ENCODE measurements at regions of chr3 and their contacts with region 1.

Region 1: DNA sequence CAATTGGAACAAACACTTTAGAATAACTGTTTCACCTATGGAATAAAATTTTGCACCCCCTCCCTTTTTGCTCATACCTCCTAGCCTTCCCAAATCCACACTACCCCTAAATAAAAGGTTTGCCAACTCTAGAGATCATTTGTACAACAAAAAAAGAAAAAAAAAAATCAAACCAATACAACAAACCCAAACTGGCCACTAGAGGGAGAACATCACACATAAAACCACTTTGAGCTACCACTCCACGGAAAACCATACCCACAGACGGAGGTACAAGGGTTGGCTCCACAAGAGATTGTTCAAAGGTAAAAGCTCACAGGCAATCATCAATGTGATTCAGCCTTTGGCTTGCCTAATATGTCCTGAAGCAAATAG is 47.6 kb downstream of the SETMAR start:
- DNase-seq: peak; percentile 31
- ATAC-seq: peak; percentile 96
- H3K4me3 ChIP-seq: no peak overlapping the region
- H3K27ac ChIP-seq: no peak overlapping the region
- H3K4me1 ChIP-seq: no peaks in the 10 kb centered on the region
- H3K27me3 ChIP-seq: no peaks in the 10 kb centered on the region
- CTCF ChIP-seq: peak; percentile 64 to 78 (median 73)
- EP300 ChIP-seq: no peak
- POLR2A ChIP-seq: no peak
- RAD21 ChIP-seq: peak; percentile 95

Region 2: GRCh38 chr3:3468596-3468995 is 882.2 kb before region 1 on chr3:
- CTCF ChIA-PET with region 1: no interaction called
- POLR2A ChIA-PET with region 1: no interaction called
- RAD21 ChIA-PET with region 1: no interaction called
- SMC1A ChIA-PET with region 1: no interaction called
- in situ Hi-C with region 1: no loop called
- intact Hi-C with region 1: no loop called
- DNase-seq: no peak
- ATAC-seq: no peak
- H3K4me3 ChIP-seq: no peak overlapping the region
- H3K27ac ChIP-seq: no peak overlapping the region
- H3K4me1 ChIP-seq: no peaks in the 10 kb centered on the region
- H3K27me3 ChIP-seq: no peaks in the 10 kb centered on the region
- CTCF ChIP-seq: no peak
- EP300 ChIP-seq: no peak
- POLR2A ChIP-seq: no peak
- RAD21 ChIP-seq: no peak

Region 3: GRCh38 chr3:4340411-4341335 is 10.1 kb before region 1 on chr3:
- CTCF ChIA-PET with region 1: interaction called, 16 read pairs
- POLR2A ChIA-PET with region 1: no interaction called
- RAD21 ChIA-PET with region 1: interaction called, 4 read pairs
- SMC1A ChIA-PET with region 1: interaction called, 7 read pairs
- in situ Hi-C with region 1: no loop called
- intact Hi-C with region 1: no loop called
- DNase-seq: no peak
- ATAC-seq: no peak
- H3K4me3 ChIP-seq: no peak overlapping the region
- H3K27ac ChIP-seq: no peak overlapping the region
- H3K4me1 ChIP-seq: no peaks in the 10 kb centered on the region
- H3K27me3 ChIP-seq: no peaks in the 10 kb centered on the region
- CTCF ChIP-seq: no peak
- EP300 ChIP-seq: no peak
- POLR2A ChIP-seq: no peak
- RAD21 ChIP-seq: no peak

Region 4: DNA sequence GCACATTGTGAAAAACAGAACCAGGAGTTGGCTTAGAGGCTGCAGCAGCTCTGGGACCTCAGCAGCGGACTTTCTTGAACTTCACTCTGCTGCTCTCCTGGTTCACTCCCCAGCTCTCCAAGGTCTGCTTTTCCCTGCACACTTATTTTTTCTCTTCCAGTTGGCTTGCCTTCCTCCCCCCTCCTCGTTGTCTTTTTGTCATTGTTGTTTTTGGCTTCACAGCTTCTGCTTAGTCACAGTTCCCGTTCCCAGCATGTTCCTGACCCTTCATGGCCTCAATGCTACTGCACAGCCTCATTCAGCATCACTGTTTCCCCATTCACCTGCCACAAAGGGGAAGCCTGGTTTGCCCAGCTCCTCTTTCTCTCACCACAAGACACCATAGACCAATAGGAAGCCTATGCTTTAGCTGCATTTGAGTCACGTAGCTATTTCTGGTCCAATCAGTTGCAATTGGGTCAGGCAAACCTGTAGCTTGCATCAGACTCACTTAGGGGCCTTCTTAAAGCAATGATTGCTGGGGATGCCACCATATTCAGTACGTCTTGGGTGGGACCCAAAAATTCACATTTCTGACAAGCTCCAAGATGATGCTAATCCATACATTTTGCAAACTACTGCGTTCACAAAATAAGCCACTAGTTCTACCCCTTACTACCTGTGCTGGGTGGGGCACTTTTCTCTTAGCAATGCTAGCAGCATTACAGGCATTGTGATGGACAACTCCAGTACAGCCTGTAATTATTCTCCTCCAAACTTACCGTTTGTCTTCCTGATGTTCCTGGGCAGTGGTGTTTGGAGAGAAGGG is 124.1 kb after region 1 on chr3:
- CTCF ChIA-PET with region 1: interaction called, 4 read pairs
- POLR2A ChIA-PET with region 1: no interaction called
- RAD21 ChIA-PET with region 1: interaction called, 10 read pairs
- SMC1A ChIA-PET with region 1: interaction called, 6 read pairs
- in situ Hi-C with region 1: no loop called
- intact Hi-C with region 1: no loop called
- DNase-seq: peak; percentile 81
- ATAC-seq: peak; percentile 91
- H3K4me3 ChIP-seq: peak overlapping the region; percentile 35; the same call in 1 of the 2 replicates
- H3K27ac ChIP-seq: peak overlapping the region; percentile 64
- H3K4me1 ChIP-seq: peaks cover 18% of the 10 kb centered on the region
- H3K27me3 ChIP-seq: no peaks in the 10 kb centered on the region
- CTCF ChIP-seq: no peak
- EP300 ChIP-seq: no peak
- POLR2A ChIP-seq: peak; percentile 42; the same call in 1 of the 2 replicates
- RAD21 ChIP-seq: no peak

Region 5: DNA sequence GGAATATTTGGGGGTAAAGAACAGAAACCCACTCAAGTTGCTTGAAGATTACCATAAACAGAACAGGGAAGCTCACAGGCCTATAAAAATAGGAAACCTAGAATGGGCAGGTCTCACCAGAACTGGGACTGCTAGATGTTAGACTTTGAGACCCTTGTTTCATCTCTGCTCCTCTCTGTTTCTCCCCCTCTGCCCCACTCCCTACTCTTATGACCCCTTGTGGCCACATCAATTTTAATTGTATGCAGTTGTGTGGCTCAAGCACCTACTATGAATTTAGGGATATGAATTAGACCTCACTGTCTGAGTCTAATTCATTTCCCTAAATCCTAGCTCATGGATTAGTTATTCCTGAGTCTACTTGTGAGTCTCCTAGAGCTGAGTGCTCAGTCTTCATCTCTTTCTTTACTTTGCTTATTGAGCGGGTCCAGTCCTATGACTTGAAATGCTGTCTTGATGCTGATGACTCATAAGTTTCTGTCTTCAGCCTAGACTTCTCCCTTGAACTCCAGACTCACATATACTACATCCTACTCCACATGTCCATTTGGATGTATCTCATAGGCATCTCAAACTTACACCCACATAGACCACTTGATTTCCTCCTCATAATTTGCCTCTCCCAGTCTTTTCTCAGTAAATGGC is 221.0 kb after region 1 on chr3:
- CTCF ChIA-PET with region 1: interaction called, 15 read pairs
- POLR2A ChIA-PET with region 1: no interaction called
- RAD21 ChIA-PET with region 1: interaction called, 8 read pairs
- SMC1A ChIA-PET with region 1: interaction called, 15 read pairs
- in situ Hi-C with region 1: no loop called
- intact Hi-C with region 1: loop called (anchors 2 kb)
- DNase-seq: no peak
- ATAC-seq: peak; percentile 77
- H3K4me3 ChIP-seq: no peak overlapping the region
- H3K27ac ChIP-seq: no peak overlapping the region
- H3K4me1 ChIP-seq: no peaks in the 10 kb centered on the region; the same call in 1 of the 2 replicates
- H3K27me3 ChIP-seq: no peaks in the 10 kb centered on the region
- CTCF ChIP-seq: peak; percentile 17 to 33 (median 30); a peak in 3 of 6 replicates
- EP300 ChIP-seq: no peak
- POLR2A ChIP-seq: no peak
- RAD21 ChIP-seq: peak; percentile 55; the same call in 1 of the 2 replicates

Region 6: GRCh38 chr3:4584456-4585249 is 233.9 kb after region 1 on chr3:
- CTCF ChIA-PET with region 1: interaction called, 36 read pairs
- POLR2A ChIA-PET with region 1: no interaction called
- RAD21 ChIA-PET with region 1: interaction called, 26 read pairs
- SMC1A ChIA-PET with region 1: interaction called, 43 read pairs
- in situ Hi-C with region 1: no loop called
- intact Hi-C with region 1: no loop called
- DNase-seq: peak; percentile 13
- ATAC-seq: peak; percentile 56
- H3K4me3 ChIP-seq: peak overlapping the region; percentile 82
- H3K27ac ChIP-seq: peak overlapping the region; percentile 30
- H3K4me1 ChIP-seq: peaks cover 13% of the 10 kb centered on the region
- H3K27me3 ChIP-seq: no peaks in the 10 kb centered on the region
- CTCF ChIP-seq: peak in 1 of 3 experiments; percentile 55; a peak in 2 of 6 replicates
- EP300 ChIP-seq: 0 out of 4 replicates have a peak, but pooled peaks of 1 of the 2 experiments have one; percentile 24
- POLR2A ChIP-seq: no peak
- RAD21 ChIP-seq: peak; percentile 54; the same call in 1 of the 2 replicates

Measured in GM12878 (cell line).